Heart right ventricle (tissue), 16 donors: ENCODE measurements at regions of chr3 and their contacts with region 1.

Region 1: DNA sequence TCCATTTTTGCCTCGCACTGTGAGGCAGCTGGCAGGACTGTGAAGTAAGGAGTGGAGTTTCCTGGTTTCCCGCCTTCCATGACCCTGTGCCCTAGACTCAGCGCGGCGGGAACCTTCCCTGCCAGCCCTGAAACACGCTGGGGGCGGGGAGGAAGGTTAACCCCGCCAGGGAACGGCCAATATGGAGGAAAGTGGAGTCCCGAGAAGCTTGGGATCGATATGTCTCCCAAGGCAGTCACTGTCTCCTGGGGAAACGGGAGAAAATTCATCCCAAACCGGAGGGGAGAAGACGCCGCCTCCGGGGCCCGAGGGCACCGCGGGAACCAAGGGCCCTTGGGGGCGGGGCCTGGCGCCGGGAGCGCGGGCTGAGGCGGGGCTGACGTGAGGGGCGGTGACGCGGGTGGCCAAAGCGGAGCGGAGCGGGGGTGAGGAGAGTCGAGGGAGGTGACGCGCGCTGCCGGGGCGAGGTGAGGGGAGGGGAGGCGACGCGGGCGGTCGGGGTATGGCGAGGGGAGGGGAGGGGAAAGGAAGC is at the start of gene HMCES:
- DNase-seq: peak; percentile 96
- ATAC-seq: peak; percentile 97 to 98 (median 98)
- H3K4me3 ChIP-seq: peak within 1 kb of the TSS; percentile 79 to 98 (median 88)
- H3K27ac ChIP-seq: peak within 1 kb of the TSS; percentile 86 to 99 (median 96)
- H3K4me1 ChIP-seq: peaks cover 0 to 52% (median 37%) of the 10 kb centered on the region in 9 donors
- H3K27me3 ChIP-seq: no peaks in the 10 kb centered on the region
- CTCF ChIP-seq: peak in 2 of 9 donors; percentile 5 to 7
- total RNA-seq, gene HMCES: 38.1 to 56.1 (median 44.5) TPM

Region 2: DNA sequence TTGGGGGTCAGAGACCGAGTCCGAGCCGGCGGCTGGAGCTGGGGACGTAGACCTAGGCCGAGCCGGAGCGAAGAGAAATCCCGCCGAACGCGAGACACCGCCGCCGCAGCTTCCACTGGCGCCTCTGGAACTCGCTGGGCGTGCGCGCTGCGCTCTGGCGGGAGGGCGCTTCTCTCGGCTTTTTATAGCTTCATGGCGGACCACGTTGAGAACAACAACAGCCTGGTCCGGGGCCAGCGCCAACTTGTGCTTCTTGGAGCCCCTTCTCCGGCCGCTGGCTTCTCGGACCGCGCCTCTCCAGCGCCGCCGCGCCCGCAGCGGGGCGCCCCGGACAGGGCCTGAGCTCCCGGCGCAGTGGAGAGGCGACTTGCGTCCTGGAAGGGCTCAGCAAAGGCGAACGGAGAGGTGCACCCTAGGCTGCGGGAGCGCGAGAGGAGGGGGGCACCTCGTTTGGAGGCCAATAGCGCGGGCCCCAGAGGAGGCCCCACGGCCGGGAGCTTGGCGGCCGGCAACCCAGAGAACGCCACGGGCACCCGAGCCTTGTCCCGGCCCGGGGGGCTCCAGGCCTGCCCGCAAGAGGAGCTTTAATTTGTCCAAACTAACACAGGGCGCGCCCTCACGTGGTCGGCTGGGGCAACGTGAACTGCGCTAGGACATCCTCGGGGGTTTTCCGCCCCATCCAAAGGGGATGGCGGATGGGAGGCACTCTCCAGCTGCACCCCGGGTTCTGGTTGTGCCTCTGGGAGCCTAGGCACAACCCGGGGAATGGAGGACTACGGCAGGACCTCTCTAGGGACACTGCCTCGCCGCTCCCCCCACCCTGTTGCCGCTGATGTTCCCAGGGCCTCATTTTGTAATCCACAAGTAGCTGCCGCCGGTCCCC is 37.9 kb after region 1 on chr3:
- intact Hi-C with region 1: loop called in 7 of 10 experiments (anchors 2 to 5 kb)
- DNase-seq: peak; percentile 87 to 89
- ATAC-seq: peak; percentile 54 to 70 (median 62)
- H3K4me3 ChIP-seq: peak overlapping the region; percentile 50 to 99 (median 94)
- H3K27ac ChIP-seq: peak overlapping the region; percentile 86 to 98 (median 93)
- H3K4me1 ChIP-seq: peaks cover 6 to 31% (median 20%) of the 10 kb centered on the region in 9 donors
- H3K27me3 ChIP-seq: no peaks in the 10 kb centered on the region
- CTCF ChIP-seq: peak in 8 of 9 donors; percentile 7 to 79 (median 58)